ENCODE measurements at regions of chr7 and their contacts with region 1.

Region 1: DNA sequence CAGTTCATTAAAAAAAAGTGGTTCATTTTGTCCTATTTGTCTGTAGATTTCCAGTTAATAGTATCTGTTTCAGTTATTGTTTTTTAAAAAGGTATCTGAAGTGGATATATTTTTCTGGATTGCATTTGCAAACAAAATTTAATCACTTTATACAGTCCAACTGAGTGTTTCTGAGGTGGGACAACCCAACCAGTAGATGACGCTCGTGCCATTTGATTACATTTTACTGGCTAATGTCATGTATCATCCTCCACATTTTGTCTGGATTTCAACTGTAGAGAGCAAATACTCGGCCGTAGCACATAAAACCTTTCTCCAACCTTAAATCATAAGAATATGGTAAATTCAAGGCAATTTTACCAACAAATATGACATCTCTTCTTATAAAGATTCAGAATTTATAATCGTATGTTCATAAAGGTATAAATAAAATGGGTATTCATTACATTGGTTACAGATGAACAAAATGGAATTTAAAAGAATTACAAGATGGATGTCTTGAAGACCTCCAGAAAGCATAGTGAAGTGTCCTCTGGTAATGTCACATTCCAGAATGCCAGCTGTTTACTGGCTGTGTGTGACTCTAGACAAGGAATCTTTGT is 789.0 kb downstream of the PHTF2 start:
- DNase-seq: peak; percentile 10
- ATAC-seq: no peak
- H3K4me3 ChIP-seq: no peak overlapping the region
- H3K27ac ChIP-seq: no peak overlapping the region
- H3K4me1 ChIP-seq: peaks cover 11% of the 10 kb centered on the region
- H3K27me3 ChIP-seq: no peaks in the 10 kb centered on the region
- CTCF ChIP-seq: peak; percentile 35; the same call in 1 of the 2 replicates
- EP300 ChIP-seq: no peak
- POLR2A ChIP-seq: no peak
- RAD21 ChIP-seq: no peak

Region 2: DNA sequence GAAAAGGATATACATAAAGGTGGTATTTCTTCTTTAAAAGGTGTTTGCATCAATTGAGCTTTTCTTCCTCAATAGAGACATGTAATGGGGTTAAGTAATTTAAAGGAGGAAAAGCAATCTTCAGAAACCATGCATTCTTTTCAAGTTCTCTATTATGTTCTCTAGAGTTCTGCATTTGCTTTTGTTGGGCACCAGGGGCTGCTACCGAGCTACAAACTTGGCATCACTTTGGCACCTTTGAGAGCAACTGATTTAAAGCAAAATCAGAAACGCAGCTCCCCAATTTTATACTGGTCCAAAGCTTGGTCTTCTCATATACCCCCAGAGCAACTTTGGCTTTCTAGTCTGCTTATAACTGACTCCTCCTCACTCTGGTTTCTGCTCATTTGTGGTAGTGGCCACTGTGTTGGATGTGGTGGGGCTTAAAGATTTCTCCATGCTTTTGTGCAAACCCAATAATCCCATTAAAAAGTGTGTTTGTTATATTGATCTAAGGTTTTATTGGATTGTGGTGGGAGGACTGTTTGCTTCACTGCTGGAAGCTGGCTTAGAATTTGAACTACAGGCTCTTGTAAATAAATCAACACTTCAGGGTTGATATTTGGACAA is 76.9 kb before region 1 on chr7:
- CTCF ChIA-PET with region 1: no interaction called
- POLR2A ChIA-PET with region 1: no interaction called
- in situ Hi-C with region 1: no loop called
- intact Hi-C with region 1: loop called (anchors 10 kb)
- DNase-seq: peak; percentile 23
- ATAC-seq: peak; percentile 72
- H3K4me3 ChIP-seq: no peak overlapping the region
- H3K27ac ChIP-seq: no peak overlapping the region
- H3K4me1 ChIP-seq: no peaks in the 10 kb centered on the region
- H3K27me3 ChIP-seq: no peaks in the 10 kb centered on the region
- CTCF ChIP-seq: peak; percentile 61
- EP300 ChIP-seq: no peak
- POLR2A ChIP-seq: no peak
- RAD21 ChIP-seq: no peak

Region 3: GRCh38 chr7:78568690-78569089 is 18.9 kb before region 1 on chr7:
- CTCF ChIA-PET with region 1: no interaction called
- POLR2A ChIA-PET with region 1: no interaction called
- in situ Hi-C with region 1: no loop called
- intact Hi-C with region 1: no loop called
- DNase-seq: no peak
- ATAC-seq: no peak
- H3K4me3 ChIP-seq: no peak overlapping the region
- H3K27ac ChIP-seq: no peak overlapping the region
- H3K4me1 ChIP-seq: no peaks in the 10 kb centered on the region
- H3K27me3 ChIP-seq: no peaks in the 10 kb centered on the region
- CTCF ChIP-seq: no peak
- EP300 ChIP-seq: no peak
- POLR2A ChIP-seq: no peak
- RAD21 ChIP-seq: no peak

Region 4: GRCh38 chr7:78679112-78679876 is 91.8 kb after region 1 on chr7:
- CTCF ChIA-PET with region 1: no interaction called
- POLR2A ChIA-PET with region 1: no interaction called
- in situ Hi-C with region 1: no loop called
- intact Hi-C with region 1: no loop called
- DNase-seq: no peak
- ATAC-seq: no peak
- H3K4me3 ChIP-seq: no peak overlapping the region
- H3K27ac ChIP-seq: no peak overlapping the region
- H3K4me1 ChIP-seq: no peaks in the 10 kb centered on the region
- H3K27me3 ChIP-seq: no peaks in the 10 kb centered on the region
- CTCF ChIP-seq: no peak
- EP300 ChIP-seq: no peak
- POLR2A ChIP-seq: no peak
- RAD21 ChIP-seq: no peak

Region 5: GRCh38 chr7:79176859-79177477 is 589.4 kb after region 1 on chr7:
- CTCF ChIA-PET with region 1: no interaction called
- POLR2A ChIA-PET with region 1: no interaction called
- in situ Hi-C with region 1: no loop called
- intact Hi-C with region 1: loop called (anchors 5 kb)
- DNase-seq: peak; percentile 10
- ATAC-seq: no peak
- H3K4me3 ChIP-seq: no peak overlapping the region
- H3K27ac ChIP-seq: no peak overlapping the region
- H3K4me1 ChIP-seq: no peaks in the 10 kb centered on the region
- H3K27me3 ChIP-seq: no peaks in the 10 kb centered on the region
- CTCF ChIP-seq: peak; percentile 63
- EP300 ChIP-seq: no peak
- POLR2A ChIP-seq: no peak
- RAD21 ChIP-seq: no peak

Measured in HepG2 (cell line).